ENCODE measurements at regions of chr11 and their contacts with region 1.

Region 1: DNA sequence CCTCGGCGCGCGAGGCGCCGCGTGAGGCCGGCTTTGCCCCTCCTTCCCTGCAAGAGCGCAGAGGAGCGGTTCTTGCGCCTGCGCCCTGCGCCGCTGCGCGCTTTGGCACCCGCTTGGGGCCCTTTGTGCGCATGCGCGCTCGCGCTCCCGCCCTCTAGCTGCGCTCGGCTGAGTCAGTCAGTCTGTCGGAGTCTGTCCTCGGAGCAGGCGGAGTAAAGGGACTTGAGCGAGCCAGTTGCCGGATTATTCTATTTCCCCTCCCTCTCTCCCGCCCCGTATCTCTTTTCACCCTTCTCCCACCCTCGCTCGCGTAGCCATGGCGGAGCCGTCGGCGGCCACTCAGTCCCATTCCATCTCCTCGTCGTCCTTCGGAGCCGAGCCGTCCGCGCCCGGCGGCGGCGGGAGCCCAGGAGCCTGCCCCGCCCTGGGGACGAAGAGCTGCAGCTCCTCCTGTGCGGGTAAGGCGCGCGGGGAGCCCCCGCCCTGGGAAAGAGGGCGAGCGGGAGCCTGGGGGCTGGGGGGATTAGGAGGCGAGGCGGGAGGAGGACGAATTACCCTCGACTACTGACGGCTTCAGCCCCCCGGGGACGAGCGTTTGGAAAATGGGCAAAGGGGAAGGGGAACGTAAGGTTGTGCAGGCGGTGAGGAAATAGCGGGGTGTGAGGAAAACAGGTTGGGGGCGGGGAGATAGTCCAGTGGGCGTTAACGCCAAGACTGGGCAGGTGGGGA is at the start of gene RTN3:
- DNase-seq: peak; percentile 99
- H3K4me3 ChIP-seq: peak within 1 kb of the TSS; percentile 68
- H3K27ac ChIP-seq: peak within 1 kb of the TSS; percentile 92
- H3K4me1 ChIP-seq: peaks cover 39% of the 10 kb centered on the region
- H3K27me3 ChIP-seq: no peaks in the 10 kb centered on the region
- CTCF ChIP-seq: 0 out of 2 replicates have a peak, but pooled peaks have one; percentile 14
- total RNA-seq, gene RTN3: 268 and 275 TPM in 2 replicates

Region 2: DNA sequence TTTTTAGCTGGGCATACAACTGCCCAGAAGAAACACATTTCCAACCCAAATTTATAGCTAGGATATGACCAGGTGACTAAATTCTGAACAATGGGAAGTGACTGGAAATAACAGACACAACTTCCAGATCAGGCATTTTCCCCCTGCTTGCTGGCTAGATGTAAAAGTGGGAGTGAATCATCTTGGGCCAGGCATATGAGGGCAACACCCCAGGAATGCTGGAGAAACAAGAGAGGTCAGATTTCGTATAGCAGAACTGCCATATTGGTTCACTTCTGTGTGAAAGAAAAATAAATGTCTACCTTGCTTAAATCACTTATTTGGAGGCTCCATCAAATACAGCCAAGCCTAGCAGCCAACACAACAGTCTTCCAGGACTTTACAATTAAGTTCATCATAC is 17.7 kb before region 1 on chr11:
- CTCF ChIA-PET with region 1: no interaction called
- POLR2A ChIA-PET with region 1: interaction called, 18 read pairs
- intact Hi-C with region 1: no loop called
- DNase-seq: no peak
- H3K4me3 ChIP-seq: no peak overlapping the region
- H3K27ac ChIP-seq: no peak overlapping the region
- H3K4me1 ChIP-seq: peaks cover 21% of the 10 kb centered on the region
- H3K27me3 ChIP-seq: no peaks in the 10 kb centered on the region
- CTCF ChIP-seq: no peak

Region 3: GRCh38 chr11:63738720-63739360 is 57.4 kb after region 1 on chr11:
- CTCF ChIA-PET with region 1: no interaction called
- POLR2A ChIA-PET with region 1: no interaction called
- intact Hi-C with region 1: loop called (anchors 5 kb)
- DNase-seq: peak; percentile 87
- H3K4me3 ChIP-seq: no peak overlapping the region
- H3K27ac ChIP-seq: no peak overlapping the region
- H3K4me1 ChIP-seq: peaks cover 14% of the 10 kb centered on the region
- H3K27me3 ChIP-seq: no peaks in the 10 kb centered on the region
- CTCF ChIP-seq: peak; percentile 98

Region 4: DNA sequence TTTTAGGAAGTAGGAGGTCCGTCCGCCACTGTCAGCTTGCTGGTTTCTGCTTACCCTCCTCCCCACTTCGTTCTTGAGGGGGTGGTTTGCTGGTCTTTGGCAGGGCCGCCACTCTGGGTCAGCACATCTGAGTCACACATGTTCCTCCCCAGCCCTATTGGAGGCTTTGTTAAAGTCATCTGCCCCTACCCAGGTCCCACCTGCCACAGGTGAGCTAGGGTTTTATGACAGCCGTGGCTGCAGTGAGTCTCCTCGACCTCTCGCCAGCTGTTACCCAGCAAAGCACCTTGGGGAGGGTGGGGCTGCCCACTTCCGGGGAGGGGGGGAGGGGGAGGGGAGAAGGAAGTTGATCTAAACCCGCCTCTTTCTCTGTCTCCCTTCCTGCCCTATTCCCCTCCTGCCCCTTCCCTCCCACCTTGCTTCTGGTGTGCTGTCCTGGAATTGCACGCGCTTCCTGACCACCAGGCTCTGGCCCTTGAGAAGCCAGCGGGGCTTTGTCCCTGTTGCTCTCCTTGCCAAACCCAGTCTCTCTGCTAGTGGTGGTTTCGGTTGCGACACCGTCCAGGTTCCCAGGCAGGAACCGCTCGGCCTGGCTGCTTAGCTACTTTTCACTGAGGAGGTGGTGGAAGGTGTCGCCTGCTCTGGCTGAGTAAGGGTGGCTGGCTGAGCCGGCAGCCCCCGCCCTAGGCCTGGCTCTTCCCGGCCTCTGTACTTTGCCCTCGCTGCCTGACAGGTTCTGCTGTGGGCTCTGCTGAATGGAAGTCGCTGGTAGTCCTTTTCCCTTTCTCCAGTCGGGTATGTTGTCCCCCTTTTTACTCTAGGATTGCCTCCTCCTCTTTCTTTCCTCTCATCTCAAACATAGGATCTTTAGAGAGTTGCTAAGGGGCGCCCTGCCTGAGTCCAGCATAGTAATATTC is 206.9 kb after region 1 on chr11:
- CTCF ChIA-PET with region 1: no interaction called
- POLR2A ChIA-PET with region 1: no interaction called
- intact Hi-C with region 1: no loop called
- DNase-seq: no peak
- H3K4me3 ChIP-seq: no peak overlapping the region
- H3K27ac ChIP-seq: peak overlapping the region; percentile 38
- H3K4me1 ChIP-seq: peaks cover 5% of the 10 kb centered on the region
- H3K27me3 ChIP-seq: no peaks in the 10 kb centered on the region
- CTCF ChIP-seq: no peak

Region 5: GRCh38 chr11:64173616-64174355 is 492.3 kb after region 1 on chr11:
- CTCF ChIA-PET with region 1: interaction called, 10 read pairs
- POLR2A ChIA-PET with region 1: no interaction called
- intact Hi-C with region 1: no loop called
- DNase-seq: peak; percentile 42
- H3K4me3 ChIP-seq: no peak overlapping the region
- H3K27ac ChIP-seq: no peak overlapping the region
- H3K4me1 ChIP-seq: no peaks in the 10 kb centered on the region
- H3K27me3 ChIP-seq: no peaks in the 10 kb centered on the region
- CTCF ChIP-seq: no peak

Region 6: DNA sequence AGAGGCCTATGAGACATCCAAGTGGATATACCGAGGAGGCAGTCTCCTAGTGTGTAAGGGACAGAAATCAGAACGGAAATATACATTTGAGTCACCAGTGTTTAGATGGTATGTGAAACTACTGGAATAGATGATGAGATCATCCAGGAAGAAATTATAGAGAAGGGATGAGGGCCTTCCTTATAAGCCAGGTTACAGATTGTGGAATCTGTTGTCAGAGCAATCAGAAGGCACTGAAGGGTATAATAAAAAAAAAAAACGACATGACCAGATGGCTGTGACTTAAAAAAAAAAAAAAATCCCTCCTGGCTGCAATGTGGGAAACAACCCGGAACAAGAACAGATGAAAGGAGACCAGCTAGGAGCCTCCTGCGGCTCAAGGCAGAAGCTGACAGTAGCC is 1287.7 kb after region 1 on chr11:
- CTCF ChIA-PET with region 1: no interaction called
- POLR2A ChIA-PET with region 1: no interaction called
- intact Hi-C with region 1: no loop called
- DNase-seq: peak; percentile 39
- H3K4me3 ChIP-seq: no peak overlapping the region
- H3K27ac ChIP-seq: no peak overlapping the region
- H3K4me1 ChIP-seq: no peaks in the 10 kb centered on the region
- H3K27me3 ChIP-seq: no peaks in the 10 kb centered on the region
- CTCF ChIP-seq: no peak